Activated CD4-positive, alpha-beta T cell treated with anti-CD3 and anti-CD28 coated beads for 36 hours (primary cell): ENCODE measurements at regions of chr5 and their contacts with region 1.

Region 1: GRCh38 chr5:139560752-139561654 is at the start of gene UBE2D2:
- DNase-seq: peak; percentile 99
- ATAC-seq: peak; percentile 89
- H3K4me3 Mint-ChIP-seq: peak within 1 kb of the TSS; percentile 99
- H3K27ac Mint-ChIP-seq: peak within 1 kb of the TSS; percentile 99
- H3K4me1 Mint-ChIP-seq: peaks cover 27% of the 10 kb centered on the region
- H3K27me3 Mint-ChIP-seq: no peaks in the 10 kb centered on the region
- total RNA-seq, gene UBE2D2: 262 to 289 TPM

Region 2: GRCh38 chr5:138542956-138543729 is 1017.9 kb before region 1 on chr5 and contains the start of gene ETF1:
- CTCF ChIA-PET with region 1: no interaction called
- POLR2A ChIA-PET with region 1: interaction called, 3 read pairs
- intact Hi-C with region 1: loop called in 1 of 2 experiments (anchors 2 kb)
- DNase-seq: peak; percentile 100
- ATAC-seq: peak; percentile 94
- H3K4me3 Mint-ChIP-seq: peak within 1 kb of the TSS; percentile 100
- H3K27ac Mint-ChIP-seq: peak within 1 kb of the TSS; percentile 100
- H3K4me1 Mint-ChIP-seq: peaks cover 67% of the 10 kb centered on the region
- H3K27me3 Mint-ChIP-seq: no peaks in the 10 kb centered on the region
- total RNA-seq, gene ETF1: 140 to 156 TPM

Region 3: GRCh38 chr5:139210585-139210984 is 350.4 kb before region 1 on chr5:
- CTCF ChIA-PET with region 1: no interaction called
- POLR2A ChIA-PET with region 1: no interaction called
- intact Hi-C with region 1: no loop called
- DNase-seq: no peak
- ATAC-seq: no peak
- H3K4me3 Mint-ChIP-seq: no peak overlapping the region
- H3K27ac Mint-ChIP-seq: no peak overlapping the region
- H3K4me1 Mint-ChIP-seq: peaks cover 5% of the 10 kb centered on the region
- H3K27me3 Mint-ChIP-seq: no peaks in the 10 kb centered on the region

Region 4: GRCh38 chr5:139341650-139342422 is 219.2 kb before region 1 on chr5 and contains the start of gene PAIP2:
- CTCF ChIA-PET with region 1: no interaction called
- POLR2A ChIA-PET with region 1: no interaction called
- intact Hi-C with region 1: loop called in 1 of 2 experiments (anchors 2 kb)
- DNase-seq: peak; percentile 99
- ATAC-seq: peak; percentile 88
- H3K4me3 Mint-ChIP-seq: peak within 1 kb of the TSS; percentile 88
- H3K27ac Mint-ChIP-seq: peak within 1 kb of the TSS; percentile 94
- H3K4me1 Mint-ChIP-seq: peaks cover 53% of the 10 kb centered on the region
- H3K27me3 Mint-ChIP-seq: no peaks in the 10 kb centered on the region
- total RNA-seq, gene PAIP2: 101 to 126 TPM

Region 5: GRCh38 chr5:139422307-139422893 is 138.6 kb before region 1 on chr5:
- CTCF ChIA-PET with region 1: interaction called, 15 read pairs
- POLR2A ChIA-PET with region 1: no interaction called
- intact Hi-C with region 1: no loop called
- DNase-seq: peak; percentile 66
- ATAC-seq: peak; percentile 93
- H3K4me3 Mint-ChIP-seq: no peak overlapping the region
- H3K27ac Mint-ChIP-seq: no peak overlapping the region
- H3K4me1 Mint-ChIP-seq: peaks cover 5% of the 10 kb centered on the region
- H3K27me3 Mint-ChIP-seq: no peaks in the 10 kb centered on the region

Region 6: GRCh38 chr5:139495638-139496435 is 65.2 kb before region 1 on chr5:
- CTCF ChIA-PET with region 1: no interaction called
- POLR2A ChIA-PET with region 1: no interaction called
- intact Hi-C with region 1: no loop called
- DNase-seq: no peak
- ATAC-seq: peak; percentile 66
- H3K4me3 Mint-ChIP-seq: no peak overlapping the region
- H3K27ac Mint-ChIP-seq: peak overlapping the region; percentile 78
- H3K4me1 Mint-ChIP-seq: peaks cover 23% of the 10 kb centered on the region
- H3K27me3 Mint-ChIP-seq: no peaks in the 10 kb centered on the region

Region 7: GRCh38 chr5:139517683-139518564 is 43.1 kb before region 1 on chr5:
- CTCF ChIA-PET with region 1: interaction called, 7 read pairs
- POLR2A ChIA-PET with region 1: interaction called, 5 read pairs
- intact Hi-C with region 1: loop called (anchors 1 kb)
- DNase-seq: peak; percentile 95
- ATAC-seq: peak; percentile 91
- H3K4me3 Mint-ChIP-seq: peak overlapping the region; percentile 72
- H3K27ac Mint-ChIP-seq: peak overlapping the region; percentile 91
- H3K4me1 Mint-ChIP-seq: peaks cover 30% of the 10 kb centered on the region
- H3K27me3 Mint-ChIP-seq: no peaks in the 10 kb centered on the region

Region 8: GRCh38 chr5:139745800-139746690 is 185.0 kb after region 1 on chr5:
- CTCF ChIA-PET with region 1: no interaction called
- POLR2A ChIA-PET with region 1: no interaction called
- intact Hi-C with region 1: loop called in 1 of 2 experiments (anchors 2 kb)
- DNase-seq: peak; percentile 70
- ATAC-seq: peak; percentile 27
- H3K4me3 Mint-ChIP-seq: peak overlapping the region; percentile 60
- H3K27ac Mint-ChIP-seq: no peak overlapping the region
- H3K4me1 Mint-ChIP-seq: peaks cover 29% of the 10 kb centered on the region
- H3K27me3 Mint-ChIP-seq: peaks cover 16% of the 10 kb centered on the region